ENCODE measurements at regions of chr5 and their contacts with region 1.

Region 1: GRCh38 chr5:96601811-96602244 is 60.3 kb upstream of the CAST start:
- DNase-seq: peak; percentile 66
- H3K4me3 ChIP-seq: no peak overlapping the region
- CTCF ChIP-seq: peak; percentile 78

Region 2: GRCh38 chr5:95959888-95960666 is 641.8 kb before region 1 on chr5:
- in situ Hi-C with region 1: loop called (anchors 5 kb)
- DNase-seq: no peak
- H3K4me3 ChIP-seq: peak overlapping the region; percentile 96
- CTCF ChIP-seq: peak; percentile 6

Region 3: DNA sequence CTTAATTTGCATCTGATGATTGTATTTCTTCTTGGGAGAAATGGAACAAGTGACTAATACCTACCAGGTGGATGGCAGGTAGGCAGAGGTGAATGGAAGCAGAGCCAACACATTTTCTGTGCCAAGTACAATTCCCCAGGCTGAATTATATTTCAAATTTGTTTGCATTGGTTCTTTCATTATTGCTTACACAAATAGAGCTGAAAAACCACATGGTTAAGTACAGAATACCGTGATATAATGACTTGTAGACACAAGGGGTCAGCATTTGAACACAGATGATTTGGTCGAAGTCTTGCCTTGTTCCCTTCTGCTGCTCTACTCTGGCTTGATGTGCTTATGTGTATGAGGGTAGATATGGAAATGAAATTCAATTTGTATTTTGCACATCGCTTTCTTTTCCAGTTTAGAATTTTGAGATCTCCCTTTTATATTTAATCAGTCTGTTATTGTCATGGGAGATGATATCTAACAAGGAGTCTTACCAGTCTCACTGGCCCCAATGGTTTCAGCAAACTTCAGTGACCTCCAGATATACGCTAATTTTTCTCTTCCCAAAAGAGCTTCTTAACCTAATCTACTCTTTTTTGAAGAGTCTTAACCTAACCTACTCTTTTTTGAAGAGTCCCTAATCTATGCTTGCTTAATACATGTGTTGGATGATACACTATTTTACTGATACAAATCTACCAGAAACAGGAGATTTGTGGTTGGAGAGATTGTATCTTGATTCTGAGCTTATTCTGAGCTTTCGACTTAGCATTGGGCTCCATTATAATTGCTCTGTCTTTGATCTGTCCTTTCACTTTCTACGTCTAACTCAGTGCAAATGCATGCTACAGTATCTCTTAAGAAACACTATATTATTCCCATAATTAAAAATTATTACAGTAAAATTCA is 256.9 kb before region 1 on chr5:
- in situ Hi-C with region 1: loop called (anchors 5 kb)
- DNase-seq: peak; percentile 72
- H3K4me3 ChIP-seq: no peak overlapping the region
- CTCF ChIP-seq: peak; percentile 52

Measured in astrocyte of the cerebellum (primary cell).